Gastrocnemius medialis (tissue), 4 donors: ENCODE measurements at regions of chr18 and their contacts with region 1.

Region 1: GRCh38 chr18:35040988-35041814 is at the start of gene MAPRE2:
- DNase-seq: peak; percentile 93 to 98
- ATAC-seq: peak; percentile 91 to 92
- H3K4me3 ChIP-seq: peak within 1 kb of the TSS; percentile 64 to 90 (median 84)
- H3K27ac ChIP-seq: peak within 1 kb of the TSS; percentile 84 to 90 (median 87)
- H3K4me1 ChIP-seq: peaks cover 47 to 52% of the 10 kb centered on the region in 2 donors
- H3K27me3 ChIP-seq: no peaks in the 10 kb centered on the region
- CTCF ChIP-seq: no peak
- POLR2A ChIP-seq: peak; percentile 95
- total RNA-seq, gene MAPRE2: 21.3 to 46.2 (median 34.4) TPM

Region 2: GRCh38 chr18:34880882-34881834 is 160.0 kb before region 1 on chr18:
- in situ Hi-C with region 1: no loop called
- intact Hi-C with region 1: loop called (anchors 5 kb)
- DNase-seq: peak; percentile 49 to 72
- ATAC-seq: peak; percentile 94 to 95
- H3K4me3 ChIP-seq: peak overlapping the region in 2 of 4 donors; percentile 8 to 15
- H3K27ac ChIP-seq: peak overlapping the region; percentile 84 to 88 (median 86)
- H3K4me1 ChIP-seq: peaks cover 20 to 33% of the 10 kb centered on the region in 2 donors
- H3K27me3 ChIP-seq: no peaks in the 10 kb centered on the region
- CTCF ChIP-seq: peak in 4 of 5 experiments; percentile 17 to 46 (median 36)
- POLR2A ChIP-seq: peak in 1 of 2 donors; percentile 36

Region 3: DNA sequence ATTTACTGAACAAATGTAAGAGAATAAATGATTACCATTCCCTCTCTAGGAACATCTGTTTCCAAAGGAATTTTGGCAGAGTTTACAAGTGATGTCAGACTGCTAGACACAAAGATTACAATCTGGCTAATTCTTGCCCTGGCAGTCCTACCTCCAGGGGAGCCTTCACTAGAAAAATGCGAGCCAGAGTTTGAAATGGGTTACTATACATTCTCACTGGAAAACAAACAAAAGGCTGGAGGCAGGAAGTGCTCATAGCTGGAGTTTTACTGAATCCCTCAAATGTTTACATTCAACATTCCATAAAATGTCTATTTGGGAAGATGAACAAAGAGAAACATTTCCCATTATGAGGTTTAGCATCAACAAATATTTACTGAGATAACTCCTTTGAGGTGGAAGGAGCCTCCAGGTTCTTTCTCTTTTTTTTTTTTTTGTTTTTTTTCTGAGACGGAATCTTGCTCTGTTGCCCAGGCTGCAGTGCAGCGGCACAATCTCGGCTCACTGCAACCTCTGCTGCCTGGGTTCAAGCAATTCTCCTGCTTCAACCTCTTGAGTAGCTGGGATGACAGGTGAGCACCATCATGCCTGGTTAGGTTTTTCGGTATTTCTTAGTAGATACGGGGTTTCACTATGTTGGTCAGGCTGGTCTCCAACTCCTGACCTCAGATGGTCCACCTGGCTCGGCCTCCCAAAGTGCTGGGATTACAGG is 129.0 kb before region 1 on chr18:
- in situ Hi-C with region 1: no loop called
- intact Hi-C with region 1: no loop called
- DNase-seq: no peak
- ATAC-seq: no peak
- H3K4me3 ChIP-seq: no peak overlapping the region
- H3K27ac ChIP-seq: peak overlapping the region; percentile 88 to 96 (median 94)
- H3K4me1 ChIP-seq: peaks cover 35 to 40% of the 10 kb centered on the region in 2 donors
- H3K27me3 ChIP-seq: no peaks in the 10 kb centered on the region
- CTCF ChIP-seq: no peak
- POLR2A ChIP-seq: no peak

Region 4: DNA sequence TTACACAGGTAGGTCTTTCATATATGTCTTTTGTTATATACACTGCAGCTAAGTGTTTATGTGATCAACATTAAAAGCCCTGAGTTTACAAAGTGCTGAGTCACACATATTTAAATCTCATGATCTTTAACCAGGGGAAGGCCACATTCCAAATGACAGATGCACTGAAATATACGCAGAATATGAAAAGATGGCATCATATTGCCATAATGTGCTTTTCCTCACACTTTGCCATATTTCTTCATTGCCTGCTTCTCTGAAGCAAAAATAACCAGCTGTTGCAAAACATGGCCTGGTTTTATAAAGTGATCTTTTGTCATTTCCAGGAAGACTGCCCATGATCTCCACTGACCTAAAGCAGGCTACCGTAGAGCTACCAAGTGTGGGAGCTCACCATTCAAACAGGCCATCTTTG is 93.5 kb before region 1 on chr18:
- in situ Hi-C with region 1: no loop called
- intact Hi-C with region 1: loop called (anchors 10 kb)
- DNase-seq: peak; percentile 31 to 36
- ATAC-seq: peak; percentile 75 to 86
- H3K4me3 ChIP-seq: no peak overlapping the region
- H3K27ac ChIP-seq: peak overlapping the region; percentile 76 to 83 (median 80)
- H3K4me1 ChIP-seq: peaks cover 30 to 42% of the 10 kb centered on the region in 2 donors
- H3K27me3 ChIP-seq: no peaks in the 10 kb centered on the region
- CTCF ChIP-seq: no peak
- POLR2A ChIP-seq: no peak

Region 5: GRCh38 chr18:34976899-34977837 is 64.0 kb before region 1 on chr18:
- in situ Hi-C with region 1: no loop called
- intact Hi-C with region 1: loop called (anchors 2 kb)
- DNase-seq: peak; percentile 87 to 92
- ATAC-seq: peak; percentile 54 to 61
- H3K4me3 ChIP-seq: peak overlapping the region; percentile 77 to 97 (median 89)
- H3K27ac ChIP-seq: peak overlapping the region; percentile 93 to 97 (median 96)
- H3K4me1 ChIP-seq: peaks cover 38 to 46% of the 10 kb centered on the region in 2 donors
- H3K27me3 ChIP-seq: no peaks in the 10 kb centered on the region
- CTCF ChIP-seq: no peak
- POLR2A ChIP-seq: peak; percentile 86 to 95

Region 6: GRCh38 chr18:35071819-35072247 is 30.6 kb after region 1 on chr18:
- in situ Hi-C with region 1: no loop called
- intact Hi-C with region 1: loop called (anchors 5 kb)
- DNase-seq: peak in 1 of 2 donors; percentile 51
- ATAC-seq: peak; percentile 77 to 85
- H3K4me3 ChIP-seq: no peak overlapping the region
- H3K27ac ChIP-seq: peak overlapping the region; percentile 64 to 90 (median 80)
- H3K4me1 ChIP-seq: peaks cover 52 to 60% of the 10 kb centered on the region in 2 donors
- H3K27me3 ChIP-seq: no peaks in the 10 kb centered on the region
- CTCF ChIP-seq: no peak
- POLR2A ChIP-seq: no peak

Region 7: GRCh38 chr18:35123811-35124210 is 82.6 kb after region 1 on chr18:
- in situ Hi-C with region 1: no loop called
- intact Hi-C with region 1: loop called (anchors 2 kb)
- DNase-seq: no peak
- ATAC-seq: peak in 1 of 2 donors; percentile 21
- H3K4me3 ChIP-seq: no peak overlapping the region
- H3K27ac ChIP-seq: peak overlapping the region; percentile 64 to 85 (median 66)
- H3K4me1 ChIP-seq: peaks cover 59 to 62% of the 10 kb centered on the region in 2 donors
- H3K27me3 ChIP-seq: no peaks in the 10 kb centered on the region
- CTCF ChIP-seq: no peak
- POLR2A ChIP-seq: no peak